Mammary epithelial cell (primary cell): ENCODE measurements at regions of chr2 and their contacts with region 1.

Region 1: GRCh38 chr2:132267105-132267497 is 105.3 kb upstream of the ANKRD30BL start:
- DNase-seq: no peak
- H3K4me3 ChIP-seq: no peak overlapping the region
- H3K27ac ChIP-seq: no peak overlapping the region
- H3K4me1 ChIP-seq: peaks cover 4% of the 10 kb centered on the region
- H3K27me3 ChIP-seq: no peaks in the 10 kb centered on the region
- CTCF ChIP-seq: no peak

Region 2: GRCh38 chr2:132448771-132449170 is 181.7 kb after region 1 on chr2:
- CTCF ChIA-PET with region 1: no interaction called
- dilution Hi-C with region 1: no loop called
- in situ Hi-C with region 1: no loop called
- intact Hi-C with region 1: loop called (anchors 2 kb)
- DNase-seq: no peak
- H3K4me3 ChIP-seq: no peak overlapping the region
- H3K27ac ChIP-seq: no peak overlapping the region
- H3K4me1 ChIP-seq: no peaks in the 10 kb centered on the region
- H3K27me3 ChIP-seq: no peaks in the 10 kb centered on the region
- CTCF ChIP-seq: peak; percentile 62 to 73

Region 3: DNA sequence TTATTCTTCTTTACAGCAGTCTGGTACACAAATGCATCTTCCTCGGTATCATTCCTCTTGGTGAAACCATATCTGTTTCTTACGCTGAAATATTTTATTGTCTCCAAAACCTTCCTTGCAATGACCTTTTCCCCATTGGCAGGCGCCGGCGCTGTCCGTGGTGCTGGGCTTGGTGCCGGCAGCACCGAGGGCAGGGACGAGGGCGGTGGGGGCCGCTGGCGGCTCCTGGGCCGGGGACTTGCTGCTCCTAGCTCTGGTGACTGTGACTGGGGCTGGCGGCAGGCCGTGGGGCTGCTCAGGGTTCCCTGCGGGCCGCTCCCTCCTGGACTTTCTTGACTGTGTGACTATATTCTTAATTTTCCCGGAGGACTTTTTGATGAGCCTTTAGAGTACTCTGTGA is 222.0 kb after region 1 on chr2:
- CTCF ChIA-PET with region 1: no interaction called
- dilution Hi-C with region 1: no loop called
- in situ Hi-C with region 1: no loop called
- intact Hi-C with region 1: no loop called
- DNase-seq: peak; percentile 17
- H3K4me3 ChIP-seq: no peak overlapping the region
- H3K27ac ChIP-seq: no peak overlapping the region
- H3K4me1 ChIP-seq: no peaks in the 10 kb centered on the region
- H3K27me3 ChIP-seq: no peaks in the 10 kb centered on the region
- CTCF ChIP-seq: no peak

Region 4: GRCh38 chr2:132651115-132652045 is 384.3 kb after region 1 on chr2:
- CTCF ChIA-PET with region 1: no interaction called
- dilution Hi-C with region 1: no loop called
- in situ Hi-C with region 1: no loop called
- intact Hi-C with region 1: loop called (anchors 10 kb)
- DNase-seq: no peak
- H3K4me3 ChIP-seq: no peak overlapping the region
- H3K27ac ChIP-seq: no peak overlapping the region
- H3K4me1 ChIP-seq: no peaks in the 10 kb centered on the region
- H3K27me3 ChIP-seq: no peaks in the 10 kb centered on the region
- CTCF ChIP-seq: no peak

Region 5: DNA sequence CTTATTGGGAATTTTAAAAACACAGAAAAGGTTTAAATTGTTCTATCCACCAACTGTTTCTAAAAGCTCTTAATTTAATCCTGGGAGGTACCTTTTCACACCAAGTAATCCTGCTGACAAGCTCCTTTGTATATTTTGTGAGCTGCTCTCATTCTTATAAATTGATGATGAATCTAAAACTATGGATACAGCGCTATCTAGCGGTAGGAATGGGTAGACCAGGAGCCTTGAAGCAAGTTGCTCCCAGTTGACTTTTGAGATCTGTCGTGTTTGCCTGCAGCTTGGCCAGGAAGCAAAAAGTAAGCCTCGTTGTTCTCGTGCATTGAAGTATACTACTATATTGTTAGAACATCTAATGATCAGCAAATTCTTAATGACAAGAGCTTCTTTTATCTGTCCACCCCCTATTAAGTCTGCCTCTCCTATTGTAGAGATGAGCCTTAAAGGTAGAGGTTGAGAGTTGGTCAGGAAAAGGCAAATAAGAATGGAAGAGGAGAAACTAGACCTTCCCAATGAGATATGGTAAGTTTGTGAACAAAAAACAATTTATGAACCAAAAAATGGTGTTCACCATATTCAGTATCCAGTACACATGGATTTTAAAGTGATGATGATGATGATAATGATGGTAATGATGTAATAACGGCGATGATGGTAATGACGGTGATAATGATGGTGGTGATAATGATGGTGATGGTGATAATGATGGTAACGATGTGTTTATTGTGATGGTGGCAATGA is 1513.2 kb after region 1 on chr2:
- CTCF ChIA-PET with region 1: no interaction called
- dilution Hi-C with region 1: no loop called
- in situ Hi-C with region 1: no loop called
- intact Hi-C with region 1: loop called (anchors 10 kb)
- DNase-seq: peak; percentile 70
- H3K4me3 ChIP-seq: no peak overlapping the region
- H3K27ac ChIP-seq: no peak overlapping the region
- H3K4me1 ChIP-seq: no peaks in the 10 kb centered on the region
- H3K27me3 ChIP-seq: no peaks in the 10 kb centered on the region
- CTCF ChIP-seq: peak; percentile 81